Mammary epithelial cell (primary cell): ENCODE measurements at regions of chr21 and their contacts with region 1.

Region 1: GRCh38 chr21:33588485-33589335 is at the start of gene DONSON:
- DNase-seq: peak; percentile 77
- H3K4me3 ChIP-seq: peak within 1 kb of the TSS; percentile 38 to 98 (median 64)
- H3K27ac ChIP-seq: peak within 1 kb of the TSS; percentile 78
- H3K4me1 ChIP-seq: peaks cover 6% of the 10 kb centered on the region
- H3K27me3 ChIP-seq: no peaks in the 10 kb centered on the region
- CTCF ChIP-seq: no peak
- total RNA-seq, gene DONSON: 8.0 to 22.9 TPM

Region 2: GRCh38 chr21:33619726-33620125 is 31.0 kb after region 1 on chr21:
- CTCF ChIA-PET with region 1: no interaction called
- dilution Hi-C with region 1: no loop called
- in situ Hi-C with region 1: no loop called
- intact Hi-C with region 1: no loop called
- DNase-seq: no peak
- H3K4me3 ChIP-seq: no peak overlapping the region
- H3K27ac ChIP-seq: no peak overlapping the region
- H3K4me1 ChIP-seq: no peaks in the 10 kb centered on the region
- H3K27me3 ChIP-seq: no peaks in the 10 kb centered on the region
- CTCF ChIP-seq: no peak

Region 3: GRCh38 chr21:33634254-33634653 is 45.5 kb after region 1 on chr21:
- CTCF ChIA-PET with region 1: no interaction called
- dilution Hi-C with region 1: no loop called
- in situ Hi-C with region 1: no loop called
- intact Hi-C with region 1: no loop called
- DNase-seq: no peak
- H3K4me3 ChIP-seq: no peak overlapping the region
- H3K27ac ChIP-seq: no peak overlapping the region
- H3K4me1 ChIP-seq: no peaks in the 10 kb centered on the region
- H3K27me3 ChIP-seq: no peaks in the 10 kb centered on the region
- CTCF ChIP-seq: no peak

Region 4: GRCh38 chr21:33657124-33657820 is 68.6 kb after region 1 on chr21:
- CTCF ChIA-PET with region 1: no interaction called
- dilution Hi-C with region 1: no loop called
- in situ Hi-C with region 1: no loop called
- intact Hi-C with region 1: no loop called
- DNase-seq: no peak
- H3K4me3 ChIP-seq: no peak overlapping the region
- H3K27ac ChIP-seq: no peak overlapping the region
- H3K4me1 ChIP-seq: peaks cover 22% of the 10 kb centered on the region
- H3K27me3 ChIP-seq: no peaks in the 10 kb centered on the region
- CTCF ChIP-seq: no peak

Region 5: DNA sequence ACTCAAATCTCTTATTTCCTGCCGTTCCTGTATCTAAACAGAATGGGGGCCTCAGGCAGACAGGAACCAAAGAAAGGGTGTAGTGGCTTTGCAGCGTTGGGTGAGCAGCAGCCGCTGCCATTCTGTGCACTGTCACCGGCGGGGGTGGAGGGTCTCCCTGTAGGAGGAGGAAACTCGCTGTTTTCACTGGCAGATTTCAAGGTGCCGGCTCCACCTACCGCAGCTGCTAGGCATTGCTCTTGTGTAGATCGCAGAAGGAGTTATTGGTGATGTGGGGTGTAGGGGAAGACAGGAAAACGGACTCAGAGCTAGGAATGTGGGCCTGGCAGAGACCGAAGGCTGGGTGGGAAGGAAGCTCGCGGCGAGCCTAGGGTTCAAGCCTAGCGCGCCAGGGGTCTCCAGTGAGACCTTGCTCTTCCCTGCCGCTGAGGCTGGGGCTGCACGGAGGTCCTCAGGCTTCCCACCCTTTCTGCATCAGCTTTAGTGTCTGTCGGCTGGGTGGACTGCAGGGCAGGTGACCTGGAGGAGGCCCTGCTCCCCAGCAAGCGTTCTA is 306.1 kb after region 1 on chr21:
- CTCF ChIA-PET with region 1: no interaction called
- dilution Hi-C with region 1: no loop called
- in situ Hi-C with region 1: no loop called
- intact Hi-C with region 1: loop called (anchors 5 kb)
- DNase-seq: peak; percentile 63
- H3K4me3 ChIP-seq: peak overlapping the region in 1 of 3 experiments; percentile 8
- H3K27ac ChIP-seq: no peak overlapping the region
- H3K4me1 ChIP-seq: peaks cover 6% of the 10 kb centered on the region
- H3K27me3 ChIP-seq: no peaks in the 10 kb centered on the region
- CTCF ChIP-seq: peak; percentile 72 to 91